Tibial artery (tissue), 4 donors: ENCODE measurements at regions of chr5 and their contacts with region 1.

Region 1: DNA sequence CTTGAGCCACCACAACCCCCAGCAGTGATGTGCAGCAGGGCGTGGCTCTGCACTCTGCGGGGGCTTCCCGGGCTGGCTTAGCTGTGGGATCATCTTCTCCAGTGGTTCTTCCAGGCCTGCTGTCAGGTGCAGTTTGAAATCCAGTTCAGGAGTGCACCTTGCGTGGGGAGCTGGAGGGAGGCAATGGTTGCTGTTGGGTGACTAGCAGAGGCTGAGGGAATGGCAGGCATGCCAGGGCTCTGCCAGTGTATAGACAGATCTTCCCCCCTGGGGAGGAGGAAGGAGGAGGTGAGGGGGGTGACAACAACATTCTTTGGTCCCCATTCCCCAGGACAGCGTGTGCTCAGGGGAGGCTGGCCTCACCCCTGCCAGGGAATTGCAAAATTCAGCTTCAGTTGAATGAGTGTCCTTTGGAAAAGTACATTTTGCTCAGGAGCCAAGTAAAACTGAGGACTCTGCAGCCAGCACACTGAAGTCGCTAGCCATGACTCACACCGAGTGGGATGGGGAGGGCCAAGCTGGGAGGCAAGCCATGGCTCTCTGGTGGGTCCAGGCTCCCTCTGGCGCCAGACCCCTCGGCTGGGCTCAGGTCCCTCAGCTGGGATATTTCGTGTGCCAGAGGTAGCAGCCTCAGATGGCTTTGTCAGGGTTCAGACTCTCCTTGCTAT is 35.0 kb downstream of the ERGIC1 start:
- DNase-seq: peak; percentile 92 to 97
- H3K4me3 ChIP-seq: peak overlapping the region; percentile 4 to 24
- H3K27ac ChIP-seq: peak overlapping the region; percentile 92 to 93
- H3K4me1 ChIP-seq: peaks cover 23 to 98% (median 85%) of the 10 kb centered on the region in 4 donors
- H3K27me3 ChIP-seq: no peaks in the 10 kb centered on the region
- CTCF ChIP-seq: peak in 1 of 2 experiments; percentile 37

Region 2: GRCh38 chr5:172714491-172715421 is 154.3 kb before region 1 on chr5:
- intact Hi-C with region 1: loop called (anchors 5 kb)
- DNase-seq: peak; percentile 89 to 94
- H3K4me3 ChIP-seq: no peak overlapping the region
- H3K27ac ChIP-seq: peak overlapping the region; percentile 60 to 73
- H3K4me1 ChIP-seq: peaks cover 0 to 52% (median 38%) of the 10 kb centered on the region in 4 donors
- H3K27me3 ChIP-seq: peaks cover 0 to 6% of the 10 kb centered on the region in 2 donors
- CTCF ChIP-seq: peak; percentile 81 to 92

Region 3: DNA sequence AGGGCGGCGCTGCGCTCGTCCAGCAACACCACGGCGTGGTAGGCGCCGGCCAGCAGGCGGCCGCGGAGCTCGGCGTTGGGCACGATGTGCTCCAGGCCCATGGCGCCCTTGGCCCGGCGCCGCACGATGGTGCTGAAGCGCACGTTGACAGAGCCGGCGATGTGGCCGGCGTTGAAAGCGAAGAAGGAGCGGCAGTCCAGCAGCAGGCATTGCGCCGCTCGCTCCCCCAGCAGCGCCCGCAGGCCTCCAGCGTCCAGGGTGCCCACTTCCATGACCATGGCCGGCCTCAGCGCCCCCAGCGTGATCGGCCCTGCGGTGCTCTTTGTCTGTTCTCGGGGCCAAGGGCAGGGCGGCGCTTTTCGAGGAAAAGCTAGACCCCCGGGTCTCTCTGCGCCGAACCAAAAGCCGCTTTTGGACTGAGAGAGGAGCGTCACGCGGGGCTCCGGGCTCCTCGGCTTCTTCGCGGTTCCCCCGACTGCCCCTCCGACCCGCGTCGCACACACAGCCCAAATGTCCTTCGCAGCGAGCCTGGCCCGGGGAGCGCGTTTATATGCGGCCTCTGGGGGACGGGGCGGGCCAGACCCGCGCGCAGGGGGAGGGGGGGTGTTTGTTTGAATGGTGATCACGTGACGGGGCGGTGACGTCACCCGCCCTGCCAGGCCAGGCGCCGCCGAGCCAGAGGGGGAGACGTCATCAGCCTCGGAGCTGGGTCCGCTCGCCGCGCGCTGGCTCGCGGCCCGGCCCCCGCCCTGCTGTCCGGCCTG is 98.2 kb before region 1 on chr5 and contains the start of gene DUSP1:
- intact Hi-C with region 1: loop called (anchors 2 kb)
- DNase-seq: peak; percentile 100
- H3K4me3 ChIP-seq: peak within 1 kb of the TSS; percentile 78 to 80
- H3K27ac ChIP-seq: peak within 1 kb of the TSS; percentile 96 to 98
- H3K4me1 ChIP-seq: peaks cover 8 to 47% (median 28%) of the 10 kb centered on the region in 4 donors
- H3K27me3 ChIP-seq: no peaks in the 10 kb centered on the region
- CTCF ChIP-seq: peak; percentile 28 to 60

Region 4: DNA sequence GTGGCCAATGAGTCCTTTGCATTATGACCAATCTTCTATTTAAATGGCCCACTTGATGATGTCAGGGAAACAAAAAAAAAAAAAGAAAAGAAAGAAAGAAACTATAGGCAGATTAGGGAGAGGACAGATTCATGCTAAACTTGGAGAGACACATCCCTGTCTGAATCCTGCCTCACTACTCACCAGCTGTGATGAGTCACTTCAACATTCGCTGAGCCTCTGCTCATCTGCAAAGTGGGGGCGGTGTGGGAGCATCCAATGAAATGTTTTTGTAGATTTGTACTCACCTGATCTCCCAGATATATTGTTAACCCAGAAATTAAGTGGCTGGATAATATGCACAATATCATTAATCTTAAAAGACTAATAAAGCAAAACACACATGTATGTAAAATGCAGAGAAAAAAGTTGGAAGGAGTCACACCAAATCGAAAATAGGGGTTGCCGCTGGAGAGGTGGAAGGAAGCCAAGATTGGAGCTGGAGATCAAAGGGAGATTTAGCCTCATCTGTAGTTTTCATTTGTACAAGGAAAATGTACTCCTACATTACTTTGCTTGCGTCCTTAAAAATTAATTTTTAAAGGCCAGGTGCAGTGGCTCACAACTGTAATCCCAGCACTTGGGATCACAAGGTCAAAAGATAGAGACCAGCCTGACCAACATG is 52.0 kb before region 1 on chr5:
- intact Hi-C with region 1: no loop called
- DNase-seq: peak in 1 of 2 donors; percentile 12
- H3K4me3 ChIP-seq: no peak overlapping the region
- H3K27ac ChIP-seq: no peak overlapping the region
- H3K4me1 ChIP-seq: peaks cover 0 to 7% (median 0%) of the 10 kb centered on the region in 4 donors
- H3K27me3 ChIP-seq: no peaks in the 10 kb centered on the region
- CTCF ChIP-seq: no peak

Region 5: DNA sequence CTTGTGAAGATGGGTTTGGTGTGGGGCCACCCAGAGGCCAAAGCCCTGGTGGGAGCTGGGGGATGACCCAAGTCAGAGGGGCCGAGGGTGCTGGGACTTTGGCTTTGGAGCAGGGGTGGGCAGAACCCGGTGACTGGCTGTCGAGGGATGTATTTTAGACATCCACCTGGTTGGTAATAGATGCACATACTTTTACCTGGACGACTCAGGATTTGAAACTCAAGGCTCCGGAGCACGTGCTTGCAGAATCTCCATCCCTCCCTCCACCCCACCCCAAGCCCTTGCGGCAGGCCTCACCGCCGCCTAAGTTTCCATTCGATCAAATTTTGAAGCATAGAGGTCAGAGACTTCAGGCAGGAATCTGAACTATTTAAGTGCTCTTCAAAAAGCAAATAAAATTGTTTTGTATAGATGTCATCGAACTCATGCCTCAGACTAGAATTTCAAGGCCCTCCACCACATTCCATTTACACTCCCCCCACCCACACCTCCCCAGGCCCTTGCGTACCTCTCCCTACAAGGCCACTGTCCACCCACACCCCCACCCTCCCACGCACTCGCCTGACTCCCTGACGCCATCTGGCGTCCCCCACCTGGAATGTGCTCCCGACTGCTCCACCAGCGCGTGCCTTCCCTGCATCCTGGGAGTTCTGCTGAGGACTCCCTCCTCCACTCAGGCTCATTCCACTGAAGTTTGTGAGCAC is 33.6 kb after region 1 on chr5:
- intact Hi-C with region 1: loop called (anchors 2 kb)
- DNase-seq: peak; percentile 79 to 93
- H3K4me3 ChIP-seq: no peak overlapping the region
- H3K27ac ChIP-seq: peak overlapping the region; percentile 92 to 96
- H3K4me1 ChIP-seq: peaks cover 10 to 93% (median 84%) of the 10 kb centered on the region in 4 donors
- H3K27me3 ChIP-seq: no peaks in the 10 kb centered on the region
- CTCF ChIP-seq: peak; percentile 32 to 54

Region 6: GRCh38 chr5:173615884-173616576 is 747.0 kb after region 1 on chr5:
- intact Hi-C with region 1: no loop called
- DNase-seq: peak; percentile 49 to 74
- H3K4me3 ChIP-seq: peak overlapping the region; percentile 85 to 91
- H3K27ac ChIP-seq: peak overlapping the region; percentile 94 to 99
- H3K4me1 ChIP-seq: peaks cover 0 to 38% (median 24%) of the 10 kb centered on the region in 4 donors
- H3K27me3 ChIP-seq: no peaks in the 10 kb centered on the region
- CTCF ChIP-seq: peak; percentile 58 to 67